Activated T-helper 2 cell treated with anti-CD3 and anti-CD28 coated beads, Interferon-gamma antibody, Interleukin-2, Interleukin-4, amounts not matched to agents 10 μg/mL and 5 μg/mL and 100 μg/mL, durations not matched to agents 14 hours and 24 hours and 36 hours (primary cell): ENCODE measurements at regions of chr3 and their contacts with region 1.

Region 1: DNA sequence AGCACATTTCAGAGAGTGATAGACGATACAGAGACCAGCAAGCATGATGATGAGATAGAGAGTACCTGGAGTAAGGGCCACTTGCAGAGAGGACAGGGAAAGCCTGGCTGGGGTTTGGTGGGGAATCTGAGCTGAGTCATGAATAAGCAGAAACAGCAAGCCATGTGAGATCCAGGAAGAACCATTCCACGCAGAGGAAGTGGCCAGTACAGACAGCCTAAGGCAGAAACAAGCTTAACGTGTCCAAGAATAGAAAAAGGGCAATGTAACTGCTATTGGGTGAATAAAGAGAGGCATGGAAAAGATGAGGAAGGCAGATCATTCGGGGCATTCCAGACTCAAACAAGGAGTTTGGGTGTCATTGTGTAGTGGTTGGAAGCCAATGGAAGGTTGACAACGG is 816.3 kb upstream of the CFAP20DC start:
- DNase-seq: no peak
- H3K4me3 Mint-ChIP-seq: no peak overlapping the region
- H3K27ac Mint-ChIP-seq: peak overlapping the region; percentile 2
- H3K4me1 Mint-ChIP-seq: peaks cover 31% of the 10 kb centered on the region
- H3K27me3 Mint-ChIP-seq: no peaks in the 10 kb centered on the region

Region 2: GRCh38 chr3:60017631-60018030 is 151.6 kb after region 1 on chr3:
- intact Hi-C with region 1: loop called (anchors 1 kb)
- DNase-seq: peak; percentile 63
- H3K4me3 Mint-ChIP-seq: peak overlapping the region; percentile 61
- H3K27ac Mint-ChIP-seq: peak overlapping the region; percentile 98
- H3K4me1 Mint-ChIP-seq: peaks cover 64% of the 10 kb centered on the region
- H3K27me3 Mint-ChIP-seq: no peaks in the 10 kb centered on the region